Activated naive CD4-positive, alpha-beta T cell treated with anti-CD3 and anti-CD28 coated beads, Interleukin-2, amount 10 ng/mL, durations not matched to agents 7 days and 5 days (primary cell): ENCODE measurements at regions of chr11 and their contacts with region 1.

Region 1: GRCh38 chr11:45665206-45665932 is at the start of gene CHST1:
- DNase-seq: peak; percentile 40
- H3K4me3 Mint-ChIP-seq: peak within 1 kb of the TSS; percentile 60
- H3K27ac Mint-ChIP-seq: no peak within 1 kb of the TSS
- H3K4me1 Mint-ChIP-seq: peaks cover 4% of the 10 kb centered on the region
- H3K27me3 Mint-ChIP-seq: peaks cover 96% of the 10 kb centered on the region

Region 2: DNA sequence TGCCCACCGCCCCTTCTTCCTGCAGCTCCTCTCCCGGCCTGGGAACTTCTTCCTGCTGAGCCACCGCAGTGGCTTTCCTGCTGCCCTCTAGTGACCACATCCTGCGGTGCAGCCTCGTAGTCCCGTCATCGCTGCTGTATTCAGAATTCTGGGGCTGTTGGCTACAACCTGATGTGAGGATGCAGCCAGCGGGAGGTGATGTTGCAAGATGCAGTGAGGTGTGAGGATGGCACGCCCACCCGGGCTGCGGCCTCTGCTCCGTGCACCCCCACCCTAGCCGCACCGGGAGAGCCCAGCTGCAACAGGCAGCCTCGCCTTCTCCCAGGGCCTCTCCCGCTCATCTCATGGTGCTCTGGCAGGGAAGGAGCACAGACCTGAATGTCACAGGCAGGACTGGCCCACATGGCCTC is 10.0 kb before region 1 on chr11:
- CTCF ChIA-PET with region 1: interaction called, 11 read pairs
- DNase-seq: peak; percentile 69
- H3K4me3 Mint-ChIP-seq: no peak overlapping the region
- H3K27ac Mint-ChIP-seq: no peak overlapping the region
- H3K4me1 Mint-ChIP-seq: no peaks in the 10 kb centered on the region
- H3K27me3 Mint-ChIP-seq: peaks cover 66% of the 10 kb centered on the region

Region 3: GRCh38 chr11:45726493-45727054 is 61.2 kb after region 1 on chr11:
- CTCF ChIA-PET with region 1: no interaction called
- DNase-seq: no peak
- H3K4me3 Mint-ChIP-seq: no peak overlapping the region
- H3K27ac Mint-ChIP-seq: no peak overlapping the region
- H3K4me1 Mint-ChIP-seq: no peaks in the 10 kb centered on the region
- H3K27me3 Mint-ChIP-seq: peaks cover 28% of the 10 kb centered on the region